Head of caudate nucleus (tissue), 42 donors: ENCODE measurements at regions of chr16 and their contacts with region 1.

Region 1: GRCh38 chr16:19502395-19503131 is 19.3 kb downstream of the GDE1 start:
- DNase-seq: peak; percentile 43 to 94 (median 84)

Region 2: GRCh38 chr16:19400697-19401096 is 101.9 kb before region 1 on chr16:
- intact Hi-C with region 1: loop called (anchors 10 kb)
- DNase-seq: no peak